Colonic mucosa (tissue), 4 donors: ENCODE measurements at regions of chr12 and their contacts with region 1.

Region 1: GRCh38 chr12:116717466-116718437 is 20.1 kb downstream of the SPRING1 start:
- DNase-seq: peak; percentile 50
- H3K4me3 ChIP-seq: no peak overlapping the region
- H3K27ac ChIP-seq: no peak overlapping the region
- H3K4me1 ChIP-seq: no peaks in the 10 kb centered on the region
- H3K27me3 ChIP-seq: no peaks in the 10 kb centered on the region
- CTCF ChIP-seq: no peak

Region 2: GRCh38 chr12:115983226-115983798 is 734.4 kb before region 1 on chr12:
- intact Hi-C with region 1: loop called (anchors 10 kb)
- DNase-seq: no peak
- H3K4me3 ChIP-seq: no peak overlapping the region
- H3K27ac ChIP-seq: no peak overlapping the region
- H3K4me1 ChIP-seq: no peaks in the 10 kb centered on the region
- H3K27me3 ChIP-seq: no peaks in the 10 kb centered on the region
- CTCF ChIP-seq: no peak

Region 3: GRCh38 chr12:116642683-116643082 is 75.1 kb before region 1 on chr12:
- intact Hi-C with region 1: no loop called
- DNase-seq: no peak
- H3K4me3 ChIP-seq: no peak overlapping the region
- H3K27ac ChIP-seq: no peak overlapping the region
- H3K4me1 ChIP-seq: no peaks in the 10 kb centered on the region
- H3K27me3 ChIP-seq: no peaks in the 10 kb centered on the region
- CTCF ChIP-seq: no peak